Posterior cingulate gyrus (tissue), 11 donors: ENCODE measurements at regions of chr2 and their contacts with region 1.

Region 1: DNA sequence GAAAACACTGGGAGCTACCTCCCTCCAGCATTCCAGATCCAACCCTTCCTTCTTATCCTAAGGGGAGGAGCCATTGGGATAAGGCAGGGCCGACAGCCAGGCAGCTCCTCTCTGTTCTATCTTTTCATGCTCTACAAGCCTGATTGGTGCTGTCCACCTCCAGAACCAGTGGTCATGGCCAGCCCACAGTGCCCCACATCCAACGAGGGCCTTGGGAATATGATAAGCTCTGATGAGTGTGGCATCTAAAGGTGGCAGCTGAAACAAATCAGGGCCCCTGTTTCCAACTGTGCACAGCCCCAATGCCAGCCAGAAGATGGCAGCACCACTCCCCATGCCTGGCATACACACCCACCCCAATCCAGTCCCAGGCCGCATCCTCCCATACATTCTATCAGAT is 329.3 kb downstream of the C1D start:
- DNase-seq: peak in 5 of 10 donors; percentile 9 to 90 (median 24)

Region 2: DNA sequence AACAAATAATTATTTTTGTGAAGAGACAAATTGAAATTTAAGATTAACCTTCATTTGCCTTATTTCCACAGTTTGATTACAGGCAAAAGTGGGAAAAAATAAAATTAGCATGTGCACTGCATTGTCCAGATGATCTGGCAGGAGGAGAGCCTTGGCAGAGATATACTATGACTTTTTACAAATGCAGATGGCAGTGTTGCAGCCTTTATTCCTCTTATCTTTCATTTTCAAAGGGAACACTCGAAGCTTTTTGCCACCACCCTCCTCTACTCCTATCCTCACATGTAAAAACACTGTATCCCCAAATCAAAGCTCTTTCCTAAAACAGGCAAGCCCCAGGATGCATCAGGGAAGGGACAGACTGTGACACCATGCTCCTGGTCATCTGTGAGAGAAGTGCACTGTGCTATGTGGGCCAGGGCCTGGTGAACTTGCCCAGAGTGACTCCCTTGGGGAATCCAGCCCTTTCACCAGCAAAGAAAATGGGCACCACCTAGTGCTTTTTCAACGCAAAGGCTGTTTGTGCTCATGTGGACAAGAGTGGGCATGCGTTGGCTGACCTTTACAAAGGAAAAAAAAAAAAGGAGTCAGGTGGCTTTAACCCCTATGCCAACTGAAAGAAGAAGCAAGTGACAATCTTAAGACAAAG is 411.0 kb before region 1 on chr2:
- intact Hi-C with region 1: no loop called
- DNase-seq: peak in 3 of 10 donors; percentile 9 to 67 (median 23)

Region 3: GRCh38 chr2:67772216-67773170 is 39.0 kb after region 1 on chr2:
- intact Hi-C with region 1: no loop called
- DNase-seq: no peak

Region 4: GRCh38 chr2:67840460-67841068 is 107.0 kb after region 1 on chr2:
- intact Hi-C with region 1: loop called (anchors 5 kb)
- DNase-seq: peak; percentile 19 to 93 (median 55)

Region 5: GRCh38 chr2:68031542-68032160 is 298.1 kb after region 1 on chr2:
- intact Hi-C with region 1: loop called (anchors 1 kb)
- DNase-seq: no peak